Calu3 (cell line): ENCODE measurements at regions of chr5 and their contacts with region 1.

Region 1: DNA sequence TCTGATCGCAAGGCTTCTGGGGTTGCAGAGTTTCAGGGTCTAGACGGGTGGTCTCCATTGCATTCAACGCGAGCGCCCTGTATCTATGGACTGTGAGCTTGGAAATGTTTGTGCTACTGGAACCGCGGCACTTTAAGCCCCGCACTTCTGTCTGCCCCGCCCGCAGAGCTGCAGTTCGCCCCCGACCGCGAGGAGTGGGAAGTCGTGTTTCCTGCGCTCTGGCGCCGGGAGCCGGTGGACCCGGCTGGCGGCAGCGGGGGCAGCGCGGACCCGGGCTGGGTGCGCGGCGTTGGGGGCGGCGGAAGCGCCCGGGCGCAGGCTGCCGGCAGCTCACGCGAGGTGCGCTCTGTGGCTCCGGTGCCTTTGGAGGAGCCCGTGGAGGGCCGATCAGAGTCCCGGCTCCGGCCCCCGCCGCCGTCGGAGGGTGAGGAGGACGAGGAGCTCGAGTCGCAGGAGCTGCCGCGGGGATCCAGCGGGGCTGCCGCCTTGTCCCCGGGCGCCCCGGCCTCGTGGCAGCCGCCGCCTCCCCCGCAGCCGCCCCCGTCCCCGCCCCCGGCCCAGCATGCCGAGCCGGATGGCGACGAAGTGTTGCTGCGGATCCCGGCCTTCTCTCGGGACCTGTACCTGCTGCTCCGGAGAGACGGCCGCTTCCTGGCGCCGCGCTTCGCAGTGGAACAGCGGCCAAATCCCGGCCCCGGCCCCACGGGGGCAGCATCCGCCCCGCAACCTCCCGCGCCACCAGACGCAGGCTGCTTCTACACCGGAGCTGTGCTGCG is 1.0 kb downstream of the ADAMTS19 start:
- DNase-seq: peak; percentile 90
- H3K4me3 Mint-ChIP-seq: peak overlapping the region; percentile 78
- H3K27ac Mint-ChIP-seq: no peak overlapping the region
- H3K4me1 Mint-ChIP-seq: peaks cover 9% of the 10 kb centered on the region
- H3K27me3 Mint-ChIP-seq: peaks cover 9% of the 10 kb centered on the region
- CTCF ChIP-seq: peak; percentile 77

Region 2: GRCh38 chr5:128632264-128632663 is 828.9 kb before region 1 on chr5:
- CTCF ChIA-PET with region 1: no interaction called
- intact Hi-C with region 1: no loop called
- DNase-seq: no peak
- H3K4me3 Mint-ChIP-seq: no peak overlapping the region
- H3K27ac Mint-ChIP-seq: no peak overlapping the region
- H3K4me1 Mint-ChIP-seq: no peaks in the 10 kb centered on the region
- H3K27me3 Mint-ChIP-seq: no peaks in the 10 kb centered on the region
- CTCF ChIP-seq: no peak

Region 3: GRCh38 chr5:129021744-129022143 is 439.4 kb before region 1 on chr5:
- CTCF ChIA-PET with region 1: no interaction called
- intact Hi-C with region 1: no loop called
- DNase-seq: no peak
- H3K4me3 Mint-ChIP-seq: no peak overlapping the region
- H3K27ac Mint-ChIP-seq: no peak overlapping the region
- H3K4me1 Mint-ChIP-seq: no peaks in the 10 kb centered on the region
- H3K27me3 Mint-ChIP-seq: no peaks in the 10 kb centered on the region
- CTCF ChIP-seq: no peak

Region 4: GRCh38 chr5:129113871-129114270 is 347.3 kb before region 1 on chr5:
- CTCF ChIA-PET with region 1: no interaction called
- intact Hi-C with region 1: loop called (anchors 10 kb)
- DNase-seq: no peak
- H3K4me3 Mint-ChIP-seq: no peak overlapping the region
- H3K27ac Mint-ChIP-seq: no peak overlapping the region
- H3K4me1 Mint-ChIP-seq: peaks cover 5% of the 10 kb centered on the region
- H3K27me3 Mint-ChIP-seq: no peaks in the 10 kb centered on the region
- CTCF ChIP-seq: no peak

Region 5: DNA sequence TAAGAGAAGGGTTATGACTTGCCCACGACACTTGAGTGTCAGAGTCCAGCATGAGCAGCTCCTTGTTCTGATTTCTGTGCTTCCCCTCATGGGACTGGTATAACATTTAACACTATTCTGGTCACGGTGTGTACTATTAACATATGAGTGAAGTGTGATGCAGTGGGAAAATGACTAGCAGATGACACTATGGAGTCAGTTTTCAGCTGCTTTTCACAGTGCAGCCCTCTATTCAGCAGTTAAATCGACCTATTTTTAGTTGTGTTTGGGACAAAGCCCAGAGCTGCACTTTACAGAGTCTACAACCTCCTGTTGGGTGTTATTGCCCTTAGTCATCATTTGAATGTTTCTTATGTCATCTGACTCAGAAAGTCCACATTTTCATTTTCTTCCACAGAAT is 502.2 kb after region 1 on chr5:
- CTCF ChIA-PET with region 1: no interaction called
- intact Hi-C with region 1: loop called (anchors 5 kb)
- DNase-seq: no peak
- H3K4me3 Mint-ChIP-seq: no peak overlapping the region
- H3K27ac Mint-ChIP-seq: no peak overlapping the region
- H3K4me1 Mint-ChIP-seq: no peaks in the 10 kb centered on the region
- H3K27me3 Mint-ChIP-seq: no peaks in the 10 kb centered on the region
- CTCF ChIP-seq: no peak